ENCODE measurements at regions of chr17 and their contacts with region 1.

Region 1: DNA sequence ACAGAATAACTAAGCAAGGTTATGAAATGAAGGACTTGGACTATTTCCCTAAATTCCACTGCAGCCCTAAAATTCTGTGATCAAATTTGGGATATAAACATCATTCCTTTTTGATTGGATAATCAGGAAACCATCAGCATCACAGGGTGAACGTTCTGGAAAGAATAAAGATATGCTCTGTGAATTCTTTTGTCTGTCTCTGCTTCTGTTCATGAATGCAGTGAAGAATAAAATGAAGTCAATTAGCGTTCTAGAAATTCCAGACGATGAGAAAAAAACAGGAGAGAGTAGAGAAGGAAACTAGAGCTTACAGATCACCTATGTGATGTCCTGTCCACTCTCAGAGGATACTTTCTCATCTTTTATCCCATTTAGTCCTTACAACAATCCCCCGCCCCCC is 295.1 kb upstream of the SOX9 start:
- DNase-seq: no peak
- H3K4me3 Mint-ChIP-seq: no peak overlapping the region
- H3K27ac Mint-ChIP-seq: no peak overlapping the region
- H3K4me1 Mint-ChIP-seq: no peaks in the 10 kb centered on the region
- H3K27me3 Mint-ChIP-seq: peaks cover 45% of the 10 kb centered on the region
- CTCF ChIP-seq: no peak

Region 2: GRCh38 chr17:71798701-71799100 is 27.0 kb before region 1 on chr17:
- CTCF ChIA-PET with region 1: no interaction called
- intact Hi-C with region 1: no loop called
- DNase-seq: no peak
- H3K4me3 Mint-ChIP-seq: no peak overlapping the region
- H3K27ac Mint-ChIP-seq: no peak overlapping the region
- H3K4me1 Mint-ChIP-seq: peaks cover 11% of the 10 kb centered on the region
- H3K27me3 Mint-ChIP-seq: no peaks in the 10 kb centered on the region
- CTCF ChIP-seq: no peak

Region 3: DNA sequence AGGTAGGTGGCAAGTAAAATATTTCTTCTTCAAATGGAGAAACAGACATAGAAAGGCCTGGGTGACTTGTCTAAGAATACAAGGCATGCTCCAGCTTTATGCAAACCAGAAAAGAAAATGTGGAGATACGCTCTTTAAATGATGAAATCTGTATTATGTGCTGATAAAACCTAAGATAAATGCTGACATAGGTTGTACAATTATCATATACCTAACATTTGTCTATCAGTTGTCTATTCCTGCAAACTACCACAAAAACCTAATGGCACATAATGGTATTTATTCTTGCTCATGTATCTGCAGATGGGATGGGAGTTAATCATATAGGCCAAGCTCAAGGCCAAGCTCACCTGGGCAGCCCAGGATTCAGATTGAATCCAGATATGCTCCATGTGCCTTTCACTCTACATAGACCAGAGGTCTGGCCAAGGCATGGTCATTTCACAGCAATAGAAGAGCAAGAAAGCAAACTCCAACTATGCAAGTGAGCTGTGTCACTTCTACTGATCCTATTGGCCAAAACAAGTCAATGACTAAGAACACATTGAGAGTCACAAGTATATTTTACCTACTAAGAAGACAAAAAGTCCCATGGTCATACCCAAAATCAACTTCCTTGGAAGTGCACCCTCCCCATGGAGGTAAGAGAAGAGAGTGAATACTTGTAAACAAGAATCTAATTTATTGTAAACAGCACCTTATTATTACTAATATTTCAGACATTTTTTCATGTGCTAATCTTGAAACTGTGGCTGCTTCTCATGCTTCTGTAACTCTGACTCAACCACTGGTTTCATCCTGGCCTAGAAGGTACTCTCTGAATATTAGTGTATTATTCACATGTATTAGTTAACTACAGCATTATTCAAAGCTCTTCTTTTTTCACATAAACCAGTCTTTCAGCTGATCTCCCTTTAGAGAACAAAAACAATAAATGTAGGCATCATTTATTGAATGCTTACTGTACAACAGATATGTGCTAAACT is 24.4 kb after region 1 on chr17:
- CTCF ChIA-PET with region 1: no interaction called
- intact Hi-C with region 1: loop called (anchors 1 kb)
- DNase-seq: no peak
- H3K4me3 Mint-ChIP-seq: no peak overlapping the region
- H3K27ac Mint-ChIP-seq: no peak overlapping the region
- H3K4me1 Mint-ChIP-seq: no peaks in the 10 kb centered on the region
- H3K27me3 Mint-ChIP-seq: no peaks in the 10 kb centered on the region
- CTCF ChIP-seq: no peak